Posterior cingulate gyrus (tissue), 11 donors: ENCODE measurements at regions of chr9 and their contacts with region 1.

Region 1: DNA sequence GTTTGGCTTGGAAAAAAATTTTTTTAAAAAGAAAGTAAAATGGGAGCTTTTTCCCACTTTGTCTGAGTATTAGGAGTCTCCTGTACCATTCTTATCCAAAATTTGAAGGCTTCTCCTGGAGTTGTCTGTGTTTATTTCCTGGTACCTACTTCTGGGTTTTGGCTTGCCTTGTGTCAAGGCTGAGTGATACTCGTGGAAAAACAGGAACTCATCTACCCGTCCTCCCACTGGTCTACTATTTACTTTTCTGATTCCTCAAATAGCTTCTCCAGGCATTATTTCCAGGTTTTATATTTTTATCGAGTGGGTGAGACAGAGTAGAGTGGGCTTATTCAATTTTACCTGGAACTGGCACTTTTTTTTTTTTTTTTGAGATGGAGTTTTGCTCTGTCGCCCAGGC is 99.4 kb downstream of the RMI1 start:
- DNase-seq: no peak

Region 2: GRCh38 chr9:84187090-84187489 is 107.1 kb after region 1 on chr9:
- intact Hi-C with region 1: loop called (anchors 10 kb)
- DNase-seq: no peak

Region 3: GRCh38 chr9:84207491-84207951 is 127.5 kb after region 1 on chr9:
- intact Hi-C with region 1: no loop called
- DNase-seq: peak in 1 of 10 donors; percentile 16